Naive thymus-derived CD4-positive, alpha-beta T cell (primary cell): ENCODE measurements at regions of chr5 and their contacts with region 1.

Region 1: GRCh38 chr5:34656001-34656699 is at the start of gene RAI14:
- DNase-seq: peak in 4 of 9 donors; percentile 11 to 44 (median 16)
- ATAC-seq: peak; percentile 27
- H3K4me3 ChIP-seq: peak within 1 kb of the TSS; percentile 57
- H3K4me3 Mint-ChIP-seq: peak within 1 kb of the TSS; percentile 80 to 100 (median 94)
- H3K27ac ChIP-seq: peak within 1 kb of the TSS; percentile 42
- H3K27ac Mint-ChIP-seq: peak within 1 kb of the TSS; percentile 34 to 92 (median 83)
- H3K4me1 ChIP-seq: peaks cover 3 to 8% of the 10 kb centered on the region in 2 donors
- H3K4me1 Mint-ChIP-seq: peaks cover 12 to 29% (median 22%) of the 10 kb centered on the region in 7 donors
- H3K27me3 ChIP-seq: peaks cover 3 to 8% of the 10 kb centered on the region in 2 donors
- H3K27me3 Mint-ChIP-seq: peaks cover 24 to 69% (median 34%) of the 10 kb centered on the region in 5 donors
- total RNA-seq, gene RAI14: 0.32 to 0.98 (median 0.89) TPM in 3 of 5 experiments, not detected in the others

Region 2: DNA sequence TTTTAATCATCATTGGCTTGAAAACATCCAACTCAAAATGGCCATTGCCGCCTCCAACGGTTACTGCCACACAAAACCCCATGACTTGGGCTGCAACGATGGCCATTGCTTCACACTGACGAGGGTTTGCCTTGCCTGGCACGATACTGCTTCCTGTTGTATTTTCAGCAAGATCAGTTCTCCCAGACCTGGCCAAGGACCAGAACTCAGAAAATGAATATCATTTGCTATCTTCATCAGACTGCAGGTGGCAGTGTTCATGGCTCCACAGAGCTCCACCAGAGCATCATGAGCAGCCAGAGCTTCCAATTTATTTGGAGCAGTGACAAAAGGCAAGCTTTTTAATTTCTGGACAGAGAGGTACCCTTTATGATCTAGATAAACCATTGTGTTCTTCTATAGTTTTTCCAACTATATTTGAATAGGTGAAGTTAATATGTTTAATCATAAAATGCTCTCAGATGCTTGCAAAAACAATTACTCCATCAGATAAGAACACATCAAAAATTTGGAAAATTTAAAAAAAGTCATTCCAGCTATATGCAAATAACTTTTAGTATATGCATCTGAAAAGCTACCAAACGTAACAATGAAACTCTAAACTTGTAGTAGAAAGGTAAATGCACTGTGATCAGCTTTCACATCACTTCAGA is 658.7 kb before region 1 on chr5:
- CTCF ChIA-PET with region 1: no interaction called
- POLR2A ChIA-PET with region 1: no interaction called
- intact Hi-C with region 1: loop called in 1 of 2 experiments (anchors 5 kb)
- DNase-seq: peak in 7 of 9 donors; percentile 20 to 43 (median 40)
- ATAC-seq: peak; percentile 70
- H3K4me3 ChIP-seq: no peak overlapping the region
- H3K4me3 Mint-ChIP-seq: no peak overlapping the region
- H3K27ac ChIP-seq: no peak overlapping the region
- H3K27ac Mint-ChIP-seq: peak overlapping the region in 6 of 9 donors; percentile 4 to 84 (median 46)
- H3K4me1 ChIP-seq: no peaks in the 10 kb centered on the region
- H3K4me1 Mint-ChIP-seq: peaks cover 4 to 42% (median 6%) of the 10 kb centered on the region in 7 donors
- H3K27me3 ChIP-seq: no peaks in the 10 kb centered on the region
- H3K27me3 Mint-ChIP-seq: no peaks in the 10 kb centered on the region

Region 3: DNA sequence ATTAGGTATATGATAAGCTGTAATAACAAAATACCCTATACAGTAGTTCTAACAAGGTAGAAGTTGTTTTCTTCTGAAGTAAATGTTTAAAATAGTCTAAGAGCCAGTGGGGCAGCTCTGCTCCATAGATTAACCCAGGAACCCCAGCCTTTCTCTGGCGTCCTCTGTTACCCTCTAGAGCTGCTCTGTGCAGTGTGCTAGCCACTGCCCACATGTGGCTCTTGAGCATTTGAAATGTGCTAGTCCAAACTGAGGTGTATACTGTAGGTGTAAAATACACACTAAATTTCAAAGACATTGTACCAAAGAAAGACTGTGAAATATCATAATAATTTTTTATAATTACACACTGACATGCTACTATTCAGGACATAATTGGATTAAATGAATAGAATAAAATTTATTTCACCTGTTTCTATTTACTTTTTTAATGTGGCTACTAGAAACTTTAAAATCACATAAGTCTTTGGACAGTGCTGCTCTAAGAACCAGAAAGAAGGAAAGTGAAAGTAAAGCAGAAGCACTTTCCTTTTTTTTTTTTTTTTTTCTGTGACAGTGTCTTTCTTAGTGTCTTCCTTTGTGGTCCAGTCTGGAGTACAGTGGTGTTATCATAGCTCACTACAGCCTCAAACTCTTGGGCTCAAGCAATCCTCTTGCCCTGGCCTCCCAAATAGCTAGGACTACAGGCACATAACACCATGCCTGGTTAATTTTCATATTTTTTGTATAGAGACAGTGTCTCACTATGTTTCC is 39.3 kb after region 1 on chr5:
- CTCF ChIA-PET with region 1: no interaction called
- POLR2A ChIA-PET with region 1: no interaction called
- intact Hi-C with region 1: no loop called
- DNase-seq: peak in 2 of 9 donors; percentile 8 to 9
- ATAC-seq: peak; percentile 59
- H3K4me3 ChIP-seq: no peak overlapping the region
- H3K4me3 Mint-ChIP-seq: peak overlapping the region in 7 of 10 donors; percentile 32 to 64 (median 38)
- H3K27ac ChIP-seq: no peak overlapping the region
- H3K27ac Mint-ChIP-seq: peak overlapping the region in 5 of 9 donors; percentile 39 to 59 (median 51)
- H3K4me1 ChIP-seq: no peaks in the 10 kb centered on the region
- H3K4me1 Mint-ChIP-seq: peaks cover 5 to 22% (median 11%) of the 10 kb centered on the region in 7 donors
- H3K27me3 ChIP-seq: no peaks in the 10 kb centered on the region
- H3K27me3 Mint-ChIP-seq: no peaks in the 10 kb centered on the region

Region 4: GRCh38 chr5:34838785-34839714 is 182.9 kb after region 1 on chr5 and contains the start of gene TTC23L:
- CTCF ChIA-PET with region 1: no interaction called
- POLR2A ChIA-PET with region 1: no interaction called
- intact Hi-C with region 1: loop called (anchors 2 to 5 kb)
- DNase-seq: peak; percentile 82 to 95 (median 90)
- ATAC-seq: peak; percentile 94
- H3K4me3 ChIP-seq: peak within 1 kb of the TSS; percentile 85
- H3K4me3 Mint-ChIP-seq: peak within 1 kb of the TSS; percentile 79 to 97 (median 92)
- H3K27ac ChIP-seq: peak within 1 kb of the TSS; percentile 78
- H3K27ac Mint-ChIP-seq: peak within 1 kb of the TSS; percentile 83 to 99 (median 94)
- H3K4me1 ChIP-seq: peaks cover 0 to 4% of the 10 kb centered on the region in 2 donors
- H3K4me1 Mint-ChIP-seq: peaks cover 6 to 16% (median 10%) of the 10 kb centered on the region in 7 donors
- H3K27me3 ChIP-seq: no peaks in the 10 kb centered on the region
- H3K27me3 Mint-ChIP-seq: peaks cover 0 to 9% (median 0%) of the 10 kb centered on the region in 5 donors
- total RNA-seq, gene TTC23L: 0.57 to 1.9 (median 1.00) TPM in 3 of 5 experiments, not detected in the others